Activated CD4-positive, alpha-beta memory T cell treated with anti-CD3 and anti-CD28 coated beads for 36 hours (primary cell): ENCODE measurements at regions of chr14 and their contacts with region 1.

Region 1: GRCh38 chr14:21476925-21477681 is at the starts of genes RAB2B and TOX4:
- DNase-seq: peak; percentile 97
- H3K4me3 Mint-ChIP-seq: peak within 1 kb of the TSS; percentile 99
- H3K27ac Mint-ChIP-seq: peak within 1 kb of the TSS; percentile 95
- H3K4me1 Mint-ChIP-seq: peaks cover 31% of the 10 kb centered on the region
- H3K27me3 Mint-ChIP-seq: no peaks in the 10 kb centered on the region
- total RNA-seq, gene RAB2B: 21.2 to 23.6 TPM
- total RNA-seq, gene TOX4: 66.1 to 67.5 TPM

Region 2: GRCh38 chr14:21414137-21414631 is 62.9 kb before region 1 on chr14:
- CTCF ChIA-PET with region 1: interaction called, 4 read pairs
- POLR2A ChIA-PET with region 1: no interaction called
- intact Hi-C with region 1: loop called (anchors 2 kb)
- DNase-seq: no peak
- H3K4me3 Mint-ChIP-seq: no peak overlapping the region
- H3K27ac Mint-ChIP-seq: peak overlapping the region; percentile 89
- H3K4me1 Mint-ChIP-seq: peaks cover 30% of the 10 kb centered on the region
- H3K27me3 Mint-ChIP-seq: no peaks in the 10 kb centered on the region

Region 3: DNA sequence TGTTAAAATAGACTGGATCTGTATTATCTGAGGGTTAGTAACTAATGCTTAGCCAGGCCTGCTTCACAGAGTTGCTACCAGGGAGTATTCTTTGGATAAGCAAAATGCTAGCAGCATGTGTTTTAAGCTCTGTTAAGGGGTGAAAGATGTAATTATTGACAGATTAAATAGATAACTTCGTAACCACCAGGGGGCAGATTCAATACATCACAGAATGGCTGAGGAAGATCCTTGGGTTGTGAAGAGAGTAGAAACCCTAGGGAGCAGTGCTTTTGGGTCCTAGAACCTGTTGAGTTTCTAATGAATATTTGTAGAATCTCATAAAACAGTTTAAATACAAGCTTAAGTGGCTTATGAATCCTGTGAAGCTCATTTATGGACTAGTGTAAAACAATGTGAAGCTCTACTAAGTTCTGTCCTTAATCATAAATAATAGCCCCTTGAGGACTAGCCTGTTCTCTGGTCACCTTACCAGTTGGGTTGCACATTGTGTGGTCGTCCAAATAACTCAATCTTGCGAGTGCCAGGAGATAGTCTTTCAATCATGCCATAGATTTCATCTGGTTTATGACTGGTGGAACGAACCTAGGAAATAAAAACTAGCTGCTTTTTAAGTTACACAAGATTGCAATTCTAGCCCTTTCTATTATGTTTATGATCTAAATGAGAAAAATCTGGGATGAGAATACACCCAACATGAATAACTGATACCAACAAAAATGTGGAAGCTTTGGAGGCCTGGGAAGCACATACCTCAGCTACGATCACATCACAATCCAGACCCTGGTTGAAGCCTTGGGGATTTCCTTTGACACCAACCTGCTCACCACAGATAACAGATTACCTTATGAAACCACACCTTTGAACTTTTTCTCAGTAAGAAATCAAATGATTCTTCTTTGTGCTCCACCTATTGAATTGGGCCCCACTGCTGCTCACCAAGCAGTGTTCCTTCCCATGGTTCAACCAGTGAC is 21.7 kb after region 1 on chr14:
- CTCF ChIA-PET with region 1: interaction called, 35 read pairs
- POLR2A ChIA-PET with region 1: interaction called, 4 read pairs
- intact Hi-C with region 1: no loop called
- DNase-seq: no peak
- H3K4me3 Mint-ChIP-seq: no peak overlapping the region
- H3K27ac Mint-ChIP-seq: peak overlapping the region; percentile 59
- H3K4me1 Mint-ChIP-seq: peaks cover 24% of the 10 kb centered on the region
- H3K27me3 Mint-ChIP-seq: no peaks in the 10 kb centered on the region

Region 4: GRCh38 chr14:21510735-21511657 is 33.9 kb after region 1 on chr14 and contains the start of gene METTL3:
- CTCF ChIA-PET with region 1: interaction called, 18 read pairs
- POLR2A ChIA-PET with region 1: interaction called, 10 read pairs
- intact Hi-C with region 1: loop called (anchors 1 kb)
- DNase-seq: peak; percentile 96
- H3K4me3 Mint-ChIP-seq: peak within 1 kb of the TSS; percentile 99
- H3K27ac Mint-ChIP-seq: peak within 1 kb of the TSS; percentile 96
- H3K4me1 Mint-ChIP-seq: peaks cover 39% of the 10 kb centered on the region
- H3K27me3 Mint-ChIP-seq: no peaks in the 10 kb centered on the region
- total RNA-seq, gene METTL3: 64.1 TPM

Region 5: DNA sequence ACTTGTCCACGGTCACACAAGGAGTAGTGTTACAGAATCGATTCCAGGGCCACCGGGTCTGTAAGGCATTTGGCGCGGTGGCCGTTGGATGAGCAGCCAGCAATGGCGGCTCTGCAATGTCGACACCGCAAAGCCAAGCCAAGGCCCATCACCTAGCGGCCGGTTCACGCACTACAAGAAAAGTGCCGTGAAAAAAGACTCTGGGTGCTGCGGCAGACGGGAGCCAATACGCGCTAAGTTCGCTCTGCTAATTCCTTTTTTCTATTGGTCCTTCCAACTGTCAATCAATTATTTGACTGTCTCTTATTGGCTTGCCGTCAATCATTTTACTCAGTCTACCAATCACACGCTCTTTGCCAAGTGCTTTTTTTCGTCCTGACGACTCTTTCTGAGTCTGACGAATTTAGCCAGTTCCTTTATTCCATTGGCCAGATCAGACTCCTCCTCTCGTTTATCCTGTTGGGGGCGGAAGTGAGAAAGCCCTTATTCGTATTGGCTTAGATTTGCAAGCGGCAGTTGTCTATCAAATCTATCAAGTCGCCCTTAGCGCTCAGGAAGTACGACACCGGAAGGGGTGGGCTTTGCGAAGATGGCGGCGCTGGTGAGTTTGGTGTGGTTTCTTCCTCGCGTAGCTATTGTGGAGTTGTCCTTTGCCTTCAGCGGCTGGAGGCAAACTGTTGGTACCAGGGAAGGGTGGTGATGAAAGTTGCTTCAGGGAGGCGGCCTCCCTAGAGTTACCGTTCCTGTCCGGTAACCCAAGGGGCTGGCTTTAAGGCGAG is 1992.2 kb after region 1 on chr14 and contains the start of gene NGDN:
- CTCF ChIA-PET with region 1: no interaction called
- POLR2A ChIA-PET with region 1: no interaction called
- intact Hi-C with region 1: loop called (anchors 10 kb)
- DNase-seq: peak; percentile 95
- H3K4me3 Mint-ChIP-seq: no peak within 1 kb of the TSS
- H3K27ac Mint-ChIP-seq: no peak within 1 kb of the TSS
- H3K4me1 Mint-ChIP-seq: peaks cover 6% of the 10 kb centered on the region
- H3K27me3 Mint-ChIP-seq: no peaks in the 10 kb centered on the region
- total RNA-seq, gene NGDN: 42.1 to 44.1 TPM